Activated B cell treated with CpG ODN at 0.5 μM for 24 hours (primary cell): ENCODE measurements at regions of chr18 and their contacts with region 1.

Region 1: GRCh38 chr18:59459369-59460079 is 100.5 kb upstream of the LMAN1 start:
- DNase-seq: no peak
- ATAC-seq: no peak
- H3K4me3 Mint-ChIP-seq: no peak overlapping the region
- H3K27ac Mint-ChIP-seq: no peak overlapping the region
- H3K4me1 Mint-ChIP-seq: no peaks in the 10 kb centered on the region
- H3K27me3 Mint-ChIP-seq: peaks cover 7% of the 10 kb centered on the region
- CTCF ChIP-seq: peak; percentile 51

Region 2: GRCh38 chr18:59470561-59471121 is 11.1 kb after region 1 on chr18:
- CTCF ChIA-PET with region 1: interaction called, 14 read pairs
- POLR2A ChIA-PET with region 1: no interaction called
- intact Hi-C with region 1: no loop called
- DNase-seq: no peak
- ATAC-seq: no peak
- H3K4me3 Mint-ChIP-seq: no peak overlapping the region
- H3K27ac Mint-ChIP-seq: no peak overlapping the region
- H3K4me1 Mint-ChIP-seq: no peaks in the 10 kb centered on the region
- H3K27me3 Mint-ChIP-seq: peaks cover 14% of the 10 kb centered on the region
- CTCF ChIP-seq: no peak

Region 3: DNA sequence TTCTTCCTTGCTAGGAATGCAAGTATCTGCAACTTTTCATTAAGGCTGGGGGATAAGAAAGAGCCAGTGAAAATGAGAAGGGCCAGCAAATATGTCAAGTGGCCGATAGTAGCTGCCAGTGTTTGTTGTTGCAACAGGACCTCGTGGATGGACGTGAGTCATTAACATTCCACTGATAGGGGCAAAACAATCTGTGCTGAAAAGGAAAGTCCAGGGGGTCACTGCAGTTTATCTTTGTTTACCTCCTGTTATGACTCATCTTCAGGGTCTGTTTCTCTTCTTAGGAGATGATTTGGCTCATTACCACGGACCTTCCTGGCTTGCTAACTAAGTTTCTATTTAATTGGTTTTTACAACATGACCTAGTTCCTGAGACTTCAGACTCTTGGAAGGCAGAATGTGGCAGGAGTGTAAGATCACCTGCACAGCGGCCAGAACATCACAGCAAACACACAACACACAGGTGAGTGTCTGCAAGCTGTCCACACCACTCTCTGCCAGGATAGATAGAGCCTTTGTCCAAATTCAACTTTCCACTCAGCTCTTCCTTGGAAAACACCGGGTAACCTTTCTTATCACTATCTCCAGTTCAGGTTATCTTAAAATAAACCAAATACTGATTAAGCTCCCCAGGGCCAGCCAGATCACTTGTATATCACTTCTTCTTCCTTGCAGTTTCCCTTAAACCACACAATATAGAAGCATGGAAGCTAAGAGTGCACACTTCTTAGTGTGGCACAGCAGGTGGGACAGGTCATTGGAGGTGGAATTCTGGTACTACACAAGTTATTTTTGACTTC is 57.0 kb after region 1 on chr18:
- CTCF ChIA-PET with region 1: no interaction called
- POLR2A ChIA-PET with region 1: no interaction called
- intact Hi-C with region 1: no loop called
- DNase-seq: no peak
- ATAC-seq: no peak
- H3K4me3 Mint-ChIP-seq: no peak overlapping the region
- H3K27ac Mint-ChIP-seq: no peak overlapping the region
- H3K4me1 Mint-ChIP-seq: no peaks in the 10 kb centered on the region
- H3K27me3 Mint-ChIP-seq: peaks cover 22% of the 10 kb centered on the region
- CTCF ChIP-seq: no peak

Region 4: DNA sequence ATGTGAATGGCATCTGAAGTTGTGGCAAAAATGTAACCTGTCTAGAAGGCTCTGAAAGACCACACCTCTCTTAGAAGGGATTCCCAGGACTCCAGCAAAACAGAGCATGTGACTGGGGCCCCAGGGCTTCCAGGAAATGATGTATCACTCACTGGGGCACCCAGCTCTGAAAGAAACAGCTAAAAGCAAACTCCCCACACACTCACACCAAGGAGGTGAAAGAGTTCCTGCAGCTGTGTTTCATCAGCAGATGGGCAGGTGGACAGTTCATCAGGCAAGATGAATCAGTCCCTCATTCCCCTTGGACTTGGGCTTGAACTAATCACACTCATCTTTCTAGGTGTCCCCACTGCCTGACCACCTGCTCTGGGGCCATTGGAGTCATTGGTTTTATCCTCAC is 161.5 kb after region 1 on chr18:
- CTCF ChIA-PET with region 1: no interaction called
- POLR2A ChIA-PET with region 1: no interaction called
- intact Hi-C with region 1: no loop called
- DNase-seq: no peak
- ATAC-seq: no peak
- H3K4me3 Mint-ChIP-seq: no peak overlapping the region
- H3K27ac Mint-ChIP-seq: no peak overlapping the region
- H3K4me1 Mint-ChIP-seq: no peaks in the 10 kb centered on the region
- H3K27me3 Mint-ChIP-seq: peaks cover 1% of the 10 kb centered on the region
- CTCF ChIP-seq: no peak

Region 5: DNA sequence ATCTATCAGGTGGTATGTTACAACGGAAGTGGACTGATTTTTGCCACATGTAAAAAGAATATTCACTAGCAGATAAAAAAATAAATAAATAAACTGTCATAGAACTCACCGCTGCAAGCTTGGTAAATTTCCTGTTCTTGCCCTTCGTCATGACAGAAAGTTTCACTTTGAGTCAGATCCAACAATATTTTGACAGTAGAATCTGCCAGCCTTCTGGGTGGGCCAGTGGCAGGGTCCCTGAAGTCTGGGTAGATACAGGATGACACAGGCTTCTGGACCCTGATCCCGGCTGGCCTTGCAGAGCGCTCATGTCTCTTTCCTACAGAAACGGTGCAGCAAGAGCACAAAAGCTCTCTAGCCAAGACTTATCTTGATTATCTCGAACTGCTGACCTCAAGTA is 342.5 kb after region 1 on chr18:
- CTCF ChIA-PET with region 1: no interaction called
- POLR2A ChIA-PET with region 1: no interaction called
- intact Hi-C with region 1: no loop called
- DNase-seq: no peak
- ATAC-seq: no peak
- H3K4me3 Mint-ChIP-seq: no peak overlapping the region
- H3K27ac Mint-ChIP-seq: no peak overlapping the region
- H3K4me1 Mint-ChIP-seq: no peaks in the 10 kb centered on the region
- H3K27me3 Mint-ChIP-seq: no peaks in the 10 kb centered on the region
- CTCF ChIP-seq: no peak

Region 6: DNA sequence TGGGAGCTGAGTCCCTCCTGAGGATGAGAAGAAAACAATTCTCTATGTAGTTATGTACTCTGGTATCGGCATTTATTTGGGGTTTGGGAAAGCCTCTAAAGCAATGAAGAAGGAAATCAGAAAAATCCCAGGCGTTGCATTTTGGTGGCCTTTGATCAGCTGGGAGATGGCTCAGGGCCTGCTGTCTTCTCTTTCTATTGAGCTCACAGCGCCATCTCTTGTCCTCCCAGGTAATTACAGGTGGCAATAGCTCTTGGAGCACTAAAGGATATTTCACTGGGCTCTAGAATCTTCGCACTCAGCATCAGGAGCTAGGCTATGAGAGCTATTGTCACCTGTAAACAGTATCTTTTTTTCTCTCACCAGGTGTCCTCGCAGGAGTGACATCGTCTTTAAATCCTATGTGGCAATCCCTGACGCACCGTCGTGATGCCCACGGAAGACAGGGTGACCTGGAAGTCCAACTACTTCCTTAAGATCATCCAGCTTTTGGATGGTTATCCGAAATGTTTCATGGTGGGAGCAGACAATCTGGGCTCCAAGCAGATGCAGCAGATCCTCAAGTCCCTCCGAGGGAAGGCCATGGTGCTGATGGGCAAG is 364.2 kb after region 1 on chr18:
- CTCF ChIA-PET with region 1: interaction called, 36 read pairs
- POLR2A ChIA-PET with region 1: no interaction called
- intact Hi-C with region 1: loop called (anchors 1 kb)
- DNase-seq: no peak
- ATAC-seq: peak; percentile 28
- H3K4me3 Mint-ChIP-seq: no peak overlapping the region
- H3K27ac Mint-ChIP-seq: no peak overlapping the region
- H3K4me1 Mint-ChIP-seq: no peaks in the 10 kb centered on the region
- H3K27me3 Mint-ChIP-seq: peaks cover 4% of the 10 kb centered on the region
- CTCF ChIP-seq: no peak

Region 7: GRCh38 chr18:60554967-60555366 is 1095.4 kb after region 1 on chr18:
- CTCF ChIA-PET with region 1: interaction called, 30 read pairs
- POLR2A ChIA-PET with region 1: no interaction called
- intact Hi-C with region 1: no loop called
- DNase-seq: no peak
- ATAC-seq: no peak
- H3K4me3 Mint-ChIP-seq: no peak overlapping the region
- H3K27ac Mint-ChIP-seq: no peak overlapping the region
- H3K4me1 Mint-ChIP-seq: no peaks in the 10 kb centered on the region
- H3K27me3 Mint-ChIP-seq: no peaks in the 10 kb centered on the region
- CTCF ChIP-seq: no peak